IMR-90 (cell line): ENCODE measurements at regions of chr2 and their contacts with region 1.

Region 1: GRCh38 chr2:8681786-8682692 is at the start of gene ID2:
- DNase-seq: peak; percentile 98
- ATAC-seq: peak; percentile 68
- H3K4me3 ChIP-seq: peak within 1 kb of the TSS; percentile 87
- H3K27ac ChIP-seq: peak within 1 kb of the TSS; percentile 90
- H3K4me1 ChIP-seq: peaks cover 11% of the 10 kb centered on the region
- H3K27me3 ChIP-seq: no peaks in the 10 kb centered on the region
- CTCF ChIP-seq: 0 out of 2 replicates have a peak, but pooled peaks have one; percentile 5
- POLR2A ChIP-seq: peak; percentile 100
- RAD21 ChIP-seq: peak; percentile 50
- total RNA-seq, gene ID2: 389 and 431 TPM in 2 replicates

Region 2: GRCh38 chr2:7427293-7428060 is 1254.6 kb before region 1 on chr2:
- CTCF ChIA-PET with region 1: interaction called, 3 read pairs
- POLR2A ChIA-PET with region 1: no interaction called
- dilution Hi-C with region 1: no loop called
- in situ Hi-C with region 1: loop called (anchors 5 kb)
- intact Hi-C with region 1: loop called (anchors 1 kb)
- DNase-seq: peak; percentile 51
- ATAC-seq: peak; percentile 75
- H3K4me3 ChIP-seq: no peak overlapping the region
- H3K27ac ChIP-seq: no peak overlapping the region
- H3K4me1 ChIP-seq: no peaks in the 10 kb centered on the region
- H3K27me3 ChIP-seq: peaks cover 15% of the 10 kb centered on the region
- CTCF ChIP-seq: peak; percentile 63
- POLR2A ChIP-seq: no peak
- RAD21 ChIP-seq: peak; percentile 77

Region 3: DNA sequence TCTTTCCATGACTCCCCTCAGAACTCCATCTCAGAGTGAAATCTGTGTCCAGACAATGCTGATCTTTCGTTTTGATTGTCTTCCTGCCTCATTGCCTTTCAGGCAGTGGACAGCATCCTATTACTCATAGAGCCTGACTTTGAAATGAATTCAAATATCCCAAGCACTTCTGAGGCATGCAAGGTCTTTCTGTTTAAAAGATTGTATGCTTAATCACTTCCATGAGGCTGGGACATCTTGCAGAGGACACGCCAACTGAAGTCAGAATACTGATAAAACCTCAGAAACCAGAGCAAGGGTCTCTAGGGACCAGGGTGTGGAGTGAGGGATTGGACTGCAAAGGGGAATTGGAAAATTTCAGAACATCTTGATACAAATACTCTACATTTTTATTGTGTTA is 836.7 kb before region 1 on chr2:
- CTCF ChIA-PET with region 1: no interaction called
- POLR2A ChIA-PET with region 1: no interaction called
- dilution Hi-C with region 1: no loop called
- in situ Hi-C with region 1: loop called (anchors 25 kb)
- intact Hi-C with region 1: loop called (anchors 5 kb)
- DNase-seq: peak; percentile 69
- ATAC-seq: peak; percentile 73
- H3K4me3 ChIP-seq: no peak overlapping the region
- H3K27ac ChIP-seq: no peak overlapping the region
- H3K4me1 ChIP-seq: peaks cover 10% of the 10 kb centered on the region
- H3K27me3 ChIP-seq: no peaks in the 10 kb centered on the region
- CTCF ChIP-seq: no peak
- POLR2A ChIP-seq: no peak
- RAD21 ChIP-seq: no peak

Region 4: GRCh38 chr2:8152392-8153257 is 529.4 kb before region 1 on chr2:
- CTCF ChIA-PET with region 1: no interaction called
- POLR2A ChIA-PET with region 1: no interaction called
- dilution Hi-C with region 1: no loop called
- in situ Hi-C with region 1: loop called (anchors 25 kb)
- intact Hi-C with region 1: loop called (anchors 5 kb)
- DNase-seq: no peak
- ATAC-seq: no peak
- H3K4me3 ChIP-seq: no peak overlapping the region
- H3K27ac ChIP-seq: no peak overlapping the region
- H3K4me1 ChIP-seq: peaks cover 13% of the 10 kb centered on the region
- H3K27me3 ChIP-seq: no peaks in the 10 kb centered on the region
- CTCF ChIP-seq: no peak
- POLR2A ChIP-seq: no peak
- RAD21 ChIP-seq: no peak

Region 5: DNA sequence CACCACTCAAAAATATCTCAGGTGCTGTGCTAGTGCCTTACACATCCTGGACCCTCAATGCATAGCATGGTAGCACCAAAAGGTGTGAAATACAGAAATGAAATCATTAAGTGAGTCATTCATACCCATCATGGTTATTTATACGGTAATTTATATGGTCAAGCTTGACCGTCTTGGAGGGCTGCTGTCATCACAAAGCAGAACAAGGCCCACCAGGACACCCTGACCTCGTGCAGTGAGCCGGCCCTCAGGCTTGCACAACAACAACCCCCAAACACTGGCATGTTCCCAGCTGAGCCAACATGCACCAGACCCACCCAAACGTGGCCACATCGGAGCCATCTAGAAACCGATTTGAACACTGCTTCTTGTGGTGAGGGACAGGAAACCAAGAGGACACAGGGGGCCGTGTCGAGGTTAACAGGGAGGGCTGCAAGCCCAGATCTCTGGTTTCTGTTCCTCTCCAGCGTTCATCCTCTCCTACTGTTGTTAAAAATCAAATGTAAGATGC is 378.7 kb before region 1 on chr2:
- CTCF ChIA-PET with region 1: no interaction called
- POLR2A ChIA-PET with region 1: no interaction called
- dilution Hi-C with region 1: no loop called
- in situ Hi-C with region 1: loop called (anchors 10 kb)
- intact Hi-C with region 1: loop called (anchors 1 kb)
- DNase-seq: no peak
- ATAC-seq: no peak
- H3K4me3 ChIP-seq: no peak overlapping the region
- H3K27ac ChIP-seq: no peak overlapping the region
- H3K4me1 ChIP-seq: peaks cover 15% of the 10 kb centered on the region
- H3K27me3 ChIP-seq: no peaks in the 10 kb centered on the region
- CTCF ChIP-seq: no peak
- POLR2A ChIP-seq: no peak
- RAD21 ChIP-seq: no peak

Region 6: GRCh38 chr2:8544786-8545694 is 137.0 kb before region 1 on chr2:
- CTCF ChIA-PET with region 1: no interaction called
- POLR2A ChIA-PET with region 1: interaction called, 5 read pairs
- dilution Hi-C with region 1: no loop called
- in situ Hi-C with region 1: loop called (anchors 10 kb)
- intact Hi-C with region 1: loop called (anchors 2 kb)
- DNase-seq: peak; percentile 93
- ATAC-seq: peak; percentile 72
- H3K4me3 ChIP-seq: no peak overlapping the region
- H3K27ac ChIP-seq: no peak overlapping the region; the same call in 1 of the 2 replicates
- H3K4me1 ChIP-seq: peaks cover 16% of the 10 kb centered on the region
- H3K27me3 ChIP-seq: 0 out of 2 replicates have a peak, but pooled peaks cover 2% of the 10 kb centered on the region
- CTCF ChIP-seq: peak; percentile 47
- POLR2A ChIP-seq: no peak; the same call in 1 of the 2 replicates
- RAD21 ChIP-seq: peak; percentile 44; the same call in 1 of the 2 replicates

Region 7: GRCh38 chr2:8719528-8719927 is 37.5 kb after region 1 on chr2:
- CTCF ChIA-PET with region 1: no interaction called
- POLR2A ChIA-PET with region 1: no interaction called
- dilution Hi-C with region 1: no loop called
- in situ Hi-C with region 1: no loop called
- intact Hi-C with region 1: no loop called
- DNase-seq: no peak
- ATAC-seq: peak; percentile 40
- H3K4me3 ChIP-seq: no peak overlapping the region
- H3K27ac ChIP-seq: no peak overlapping the region
- H3K4me1 ChIP-seq: no peaks in the 10 kb centered on the region
- H3K27me3 ChIP-seq: no peaks in the 10 kb centered on the region
- CTCF ChIP-seq: no peak
- POLR2A ChIP-seq: no peak
- RAD21 ChIP-seq: no peak